Natural killer cell (primary cell): ENCODE measurements at regions of chr5 and their contacts with region 1.

Region 1: DNA sequence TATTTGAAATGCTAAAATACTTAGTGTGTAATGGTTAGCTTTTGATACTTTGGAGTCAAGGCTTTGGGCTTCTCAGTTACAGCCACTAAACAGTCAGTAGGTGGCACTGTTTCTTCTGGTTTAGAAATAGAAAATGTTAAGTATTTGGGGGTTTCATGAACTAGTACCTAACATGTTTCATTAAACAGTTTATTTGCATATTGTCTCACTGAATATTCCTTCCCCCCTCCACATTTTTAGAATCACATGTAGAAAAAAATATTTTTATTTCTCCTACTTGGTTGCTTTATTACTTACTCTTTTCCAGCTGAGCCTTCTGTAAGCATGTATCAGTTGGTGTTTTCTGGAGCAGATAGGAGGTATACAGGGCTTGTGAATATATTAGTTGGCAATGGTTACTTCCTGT is 48.0 kb downstream of the IPO11 start:
- DNase-seq: peak in 1 of 2 donors; percentile 61
- ATAC-seq: peak in 2 of 3 donors; percentile 52 to 58
- H3K4me3 ChIP-seq: no peak overlapping the region
- H3K4me3 Mint-ChIP-seq: no peak overlapping the region
- H3K27ac ChIP-seq: no peak overlapping the region
- H3K27ac Mint-ChIP-seq: no peak overlapping the region
- H3K4me1 ChIP-seq: no peaks in the 10 kb centered on the region
- H3K4me1 Mint-ChIP-seq: peaks cover 0 to 3% of the 10 kb centered on the region in 2 donors
- H3K27me3 ChIP-seq: no peaks in the 10 kb centered on the region
- H3K27me3 Mint-ChIP-seq: no peaks in the 10 kb centered on the region
- CTCF ChIP-seq: peak; percentile 82

Region 2: GRCh38 chr5:62486672-62487071 is 26.1 kb after region 1 on chr5:
- intact Hi-C with region 1: no loop called
- DNase-seq: no peak
- ATAC-seq: peak in 1 of 3 donors; percentile 48
- H3K4me3 ChIP-seq: no peak overlapping the region
- H3K4me3 Mint-ChIP-seq: no peak overlapping the region
- H3K27ac ChIP-seq: no peak overlapping the region
- H3K27ac Mint-ChIP-seq: no peak overlapping the region
- H3K4me1 ChIP-seq: no peaks in the 10 kb centered on the region
- H3K4me1 Mint-ChIP-seq: no peaks in the 10 kb centered on the region
- H3K27me3 ChIP-seq: no peaks in the 10 kb centered on the region
- H3K27me3 Mint-ChIP-seq: no peaks in the 10 kb centered on the region
- CTCF ChIP-seq: no peak

Region 3: GRCh38 chr5:62631909-62632580 is 171.5 kb after region 1 on chr5:
- intact Hi-C with region 1: loop called (anchors 2 kb)
- DNase-seq: peak in 1 of 2 donors; percentile 23
- ATAC-seq: no peak
- H3K4me3 ChIP-seq: no peak overlapping the region
- H3K4me3 Mint-ChIP-seq: no peak overlapping the region
- H3K27ac ChIP-seq: no peak overlapping the region
- H3K27ac Mint-ChIP-seq: no peak overlapping the region
- H3K4me1 ChIP-seq: no peaks in the 10 kb centered on the region
- H3K4me1 Mint-ChIP-seq: no peaks in the 10 kb centered on the region
- H3K27me3 ChIP-seq: no peaks in the 10 kb centered on the region
- H3K27me3 Mint-ChIP-seq: no peaks in the 10 kb centered on the region
- CTCF ChIP-seq: no peak

Region 4: GRCh38 chr5:62718368-62718767 is 257.8 kb after region 1 on chr5:
- intact Hi-C with region 1: loop called (anchors 2 kb)
- DNase-seq: peak in 1 of 2 donors; percentile 12
- ATAC-seq: no peak
- H3K4me3 ChIP-seq: no peak overlapping the region
- H3K4me3 Mint-ChIP-seq: no peak overlapping the region
- H3K27ac ChIP-seq: no peak overlapping the region
- H3K27ac Mint-ChIP-seq: no peak overlapping the region
- H3K4me1 ChIP-seq: no peaks in the 10 kb centered on the region
- H3K4me1 Mint-ChIP-seq: no peaks in the 10 kb centered on the region
- H3K27me3 ChIP-seq: no peaks in the 10 kb centered on the region
- H3K27me3 Mint-ChIP-seq: peaks cover 11 to 15% of the 10 kb centered on the region in 2 donors
- CTCF ChIP-seq: no peak

Region 5: DNA sequence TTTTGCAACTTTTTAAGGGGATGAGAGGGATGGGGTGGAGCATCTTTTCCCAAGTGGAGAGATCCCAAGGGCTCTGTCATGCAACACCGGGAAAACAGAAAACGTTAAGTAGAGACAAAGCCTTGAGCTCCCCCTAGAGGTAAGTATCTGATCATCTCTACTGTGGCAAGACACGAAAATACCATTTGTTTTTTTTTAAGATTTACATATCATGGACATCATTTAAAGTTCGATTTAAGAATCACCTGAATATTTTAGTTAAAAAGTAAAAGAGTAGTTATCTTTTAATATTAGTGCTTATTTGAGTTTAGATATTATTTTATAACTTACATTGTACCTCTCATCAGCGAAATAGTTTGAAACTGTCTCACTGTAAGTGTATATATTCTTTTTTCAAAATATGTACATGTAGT is 318.4 kb after region 1 on chr5:
- intact Hi-C with region 1: loop called (anchors 1 kb)
- DNase-seq: peak in 1 of 2 donors; percentile 60
- ATAC-seq: peak in 1 of 3 donors; percentile 66
- H3K4me3 ChIP-seq: no peak overlapping the region
- H3K4me3 Mint-ChIP-seq: no peak overlapping the region
- H3K27ac ChIP-seq: no peak overlapping the region
- H3K27ac Mint-ChIP-seq: no peak overlapping the region
- H3K4me1 ChIP-seq: peaks cover 3% of the 10 kb centered on the region
- H3K4me1 Mint-ChIP-seq: no peaks in the 10 kb centered on the region
- H3K27me3 ChIP-seq: no peaks in the 10 kb centered on the region
- H3K27me3 Mint-ChIP-seq: no peaks in the 10 kb centered on the region
- CTCF ChIP-seq: peak; percentile 83